Activated CD8-positive, alpha-beta T cell treated with anti-CD3 and anti-CD28 coated beads for 36 hours (primary cell): ENCODE measurements at regions of chr11 and their contacts with region 1.

Region 1: DNA sequence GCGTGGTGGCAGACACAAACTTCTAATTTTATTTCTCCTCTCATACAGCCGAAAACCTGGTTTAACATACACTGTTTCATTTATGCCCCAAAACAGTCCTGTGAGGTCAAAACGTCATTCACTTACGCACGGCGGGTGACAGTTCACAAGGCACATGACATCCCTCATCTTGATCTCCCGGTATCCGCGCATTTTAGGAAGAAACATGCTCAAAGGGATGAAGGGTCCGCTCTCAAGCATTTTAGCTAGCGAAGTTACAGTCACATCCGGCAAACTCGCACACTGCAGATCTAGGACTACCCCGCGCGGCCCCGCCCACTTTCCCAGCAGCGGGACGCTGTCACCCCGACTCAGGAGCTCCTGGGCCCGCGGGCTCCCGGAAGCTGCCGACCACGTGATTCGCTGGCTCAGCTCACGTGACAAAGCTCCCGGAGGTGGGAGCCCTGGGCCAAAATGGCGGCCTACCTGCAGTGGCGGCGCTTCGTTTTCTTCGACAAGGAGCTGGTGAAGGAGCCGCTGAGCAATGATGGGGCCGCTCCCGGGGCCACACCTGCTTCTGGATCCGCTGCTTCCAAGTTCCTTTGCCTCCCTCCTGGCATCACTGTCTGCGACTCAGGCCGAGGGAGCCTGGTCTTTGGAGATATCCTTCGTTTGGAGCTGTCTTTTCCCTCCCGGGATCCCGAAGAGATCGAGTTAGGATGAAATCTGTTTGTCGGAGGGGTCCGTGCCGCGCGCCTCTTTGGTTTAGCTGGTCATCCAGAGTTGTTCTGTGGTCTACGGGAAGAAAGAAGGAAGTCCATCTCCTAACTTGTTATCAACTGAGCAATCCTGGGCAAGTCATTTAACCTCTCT is at the start of gene VPS11:
- DNase-seq: peak; percentile 99
- ATAC-seq: peak; percentile 98
- H3K4me3 Mint-ChIP-seq: peak within 1 kb of the TSS; percentile 87
- H3K27ac Mint-ChIP-seq: peak within 1 kb of the TSS; percentile 94
- H3K4me1 Mint-ChIP-seq: peaks cover 34% of the 10 kb centered on the region
- H3K27me3 Mint-ChIP-seq: no peaks in the 10 kb centered on the region
- CTCF ChIP-seq: no peak
- total RNA-seq, gene VPS11: 17.1 to 17.2 TPM

Region 2: GRCh38 chr11:119095066-119095880 is 27.7 kb after region 1 on chr11:
- CTCF ChIA-PET with region 1: interaction called, 3 read pairs
- POLR2A ChIA-PET with region 1: interaction called, 16 read pairs
- intact Hi-C with region 1: no loop called
- DNase-seq: peak; percentile 100
- ATAC-seq: peak; percentile 86
- H3K4me3 Mint-ChIP-seq: peak overlapping the region; percentile 93
- H3K27ac Mint-ChIP-seq: peak overlapping the region; percentile 91
- H3K4me1 Mint-ChIP-seq: peaks cover 41% of the 10 kb centered on the region
- H3K27me3 Mint-ChIP-seq: peaks cover 1% of the 10 kb centered on the region
- CTCF ChIP-seq: no peak

Region 3: DNA sequence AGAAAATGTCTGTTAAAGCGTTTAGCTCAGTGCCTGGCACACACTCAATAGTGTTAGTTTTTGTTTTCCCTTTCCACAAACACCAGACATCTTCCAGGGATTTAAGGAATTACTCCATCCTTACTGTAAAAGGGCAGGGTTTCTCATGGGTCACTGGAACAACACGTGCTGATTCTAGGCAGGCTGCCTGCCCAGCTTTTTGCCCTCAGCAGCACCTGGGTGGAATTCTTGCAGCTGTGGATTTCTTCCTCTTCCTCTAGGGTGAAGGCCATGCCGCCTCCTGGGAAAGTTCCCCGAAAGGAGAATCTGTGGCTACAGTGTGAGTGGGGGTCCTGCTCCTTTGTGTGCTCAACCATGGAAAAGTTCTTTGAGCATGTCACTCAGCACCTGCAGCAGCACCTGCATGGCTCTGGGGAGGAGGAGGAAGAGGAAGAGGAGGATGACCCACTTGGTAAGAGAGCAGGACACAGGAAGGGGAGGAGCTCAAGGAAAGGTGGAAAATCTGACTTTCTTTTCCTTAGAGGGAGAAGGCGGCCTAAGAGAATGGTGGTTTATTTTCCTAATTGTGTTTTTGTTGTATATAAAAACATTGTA is 59.2 kb after region 1 on chr11:
- CTCF ChIA-PET with region 1: no interaction called
- POLR2A ChIA-PET with region 1: no interaction called
- intact Hi-C with region 1: no loop called
- DNase-seq: no peak
- ATAC-seq: no peak
- H3K4me3 Mint-ChIP-seq: no peak overlapping the region
- H3K27ac Mint-ChIP-seq: peak overlapping the region; percentile 53
- H3K4me1 Mint-ChIP-seq: peaks cover 30% of the 10 kb centered on the region
- H3K27me3 Mint-ChIP-seq: no peaks in the 10 kb centered on the region
- CTCF ChIP-seq: no peak

Region 4: GRCh38 chr11:119584193-119585037 is 516.8 kb after region 1 on chr11:
- CTCF ChIA-PET with region 1: no interaction called
- POLR2A ChIA-PET with region 1: no interaction called
- intact Hi-C with region 1: no loop called
- DNase-seq: peak; percentile 17
- ATAC-seq: peak; percentile 37
- H3K4me3 Mint-ChIP-seq: peak overlapping the region; percentile 10
- H3K27ac Mint-ChIP-seq: no peak overlapping the region
- H3K4me1 Mint-ChIP-seq: peaks cover 4% of the 10 kb centered on the region
- H3K27me3 Mint-ChIP-seq: peaks cover 43% of the 10 kb centered on the region
- CTCF ChIP-seq: no peak